Ovary (tissue), 10 donors: ENCODE measurements at regions of chr1 and their contacts with region 1.

Region 1: DNA sequence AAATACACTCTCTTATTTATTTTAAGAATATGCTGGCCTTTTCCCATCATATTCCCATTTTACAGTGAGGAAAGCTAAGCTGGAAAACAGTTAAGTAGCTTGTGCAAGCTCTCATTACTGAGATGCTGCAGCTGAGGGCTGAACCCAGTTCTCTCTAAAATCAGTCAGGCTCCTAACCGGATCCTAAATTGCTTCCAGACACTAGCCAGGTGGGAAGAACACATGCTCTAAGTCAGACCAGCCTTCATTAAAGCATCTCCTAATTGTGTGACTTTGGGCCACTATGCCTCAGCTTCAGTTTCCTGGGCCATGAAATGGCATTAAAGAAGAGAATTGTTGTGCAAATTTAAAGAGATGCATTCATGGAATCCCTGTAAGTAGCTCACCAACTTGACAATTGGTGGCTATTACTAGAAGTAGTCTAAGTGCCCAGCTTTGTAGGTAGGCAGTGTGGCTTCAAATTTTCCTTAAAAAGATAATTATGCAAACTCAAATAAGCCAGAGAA is 228.4 kb downstream of the DAB1 start:
- DNase-seq: no peak
- H3K4me3 ChIP-seq: no peak overlapping the region
- H3K27ac ChIP-seq: no peak overlapping the region
- H3K4me1 ChIP-seq: no peaks in the 10 kb centered on the region
- H3K27me3 ChIP-seq: no peaks in the 10 kb centered on the region
- CTCF ChIP-seq: no peak
- EP300 ChIP-seq: no peak
- POLR2A ChIP-seq: no peak

Region 2: DNA sequence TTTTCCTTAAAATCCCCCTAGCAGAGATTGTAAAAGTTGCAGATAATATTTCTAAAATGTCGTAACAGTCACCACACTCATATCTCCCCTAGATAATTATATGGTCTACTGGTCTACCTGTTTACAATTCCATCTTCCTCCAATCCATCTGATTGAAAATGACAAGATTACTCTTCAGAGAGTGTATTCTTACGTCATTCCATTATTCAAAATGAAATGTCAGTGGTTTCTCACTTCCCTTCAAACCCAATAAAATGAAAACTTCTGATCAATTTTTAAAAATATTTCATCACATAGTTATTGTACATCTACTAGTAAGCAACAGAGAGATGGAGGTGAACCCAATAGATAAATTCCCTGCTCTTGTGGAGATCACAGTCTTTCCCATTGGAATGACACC is 27.5 kb before region 1 on chr1:
- intact Hi-C with region 1: no loop called
- DNase-seq: no peak
- H3K4me3 ChIP-seq: no peak overlapping the region
- H3K27ac ChIP-seq: no peak overlapping the region
- H3K4me1 ChIP-seq: no peaks in the 10 kb centered on the region
- H3K27me3 ChIP-seq: no peaks in the 10 kb centered on the region
- CTCF ChIP-seq: no peak
- EP300 ChIP-seq: no peak
- POLR2A ChIP-seq: no peak

Region 3: GRCh38 chr1:57235755-57236510 is 40.4 kb after region 1 on chr1:
- intact Hi-C with region 1: no loop called
- DNase-seq: no peak
- H3K4me3 ChIP-seq: no peak overlapping the region
- H3K27ac ChIP-seq: no peak overlapping the region
- H3K4me1 ChIP-seq: no peaks in the 10 kb centered on the region
- H3K27me3 ChIP-seq: no peaks in the 10 kb centered on the region
- CTCF ChIP-seq: no peak
- EP300 ChIP-seq: no peak
- POLR2A ChIP-seq: no peak

Region 4: GRCh38 chr1:57353654-57354053 is 158.2 kb after region 1 on chr1:
- intact Hi-C with region 1: loop called in 1 of 4 experiments (anchors 5 kb)
- DNase-seq: no peak
- H3K4me3 ChIP-seq: no peak overlapping the region
- H3K27ac ChIP-seq: no peak overlapping the region
- H3K4me1 ChIP-seq: no peaks in the 10 kb centered on the region
- H3K27me3 ChIP-seq: no peaks in the 10 kb centered on the region
- CTCF ChIP-seq: no peak
- EP300 ChIP-seq: no peak
- POLR2A ChIP-seq: no peak